ENCODE measurements at regions of chr5 and their contacts with region 1.

Region 1: GRCh38 chr5:81751009-81751835 is at the start of gene SSBP2:
- DNase-seq: peak; percentile 100
- ATAC-seq: peak; percentile 98
- total RNA-seq, gene SSBP2: 131 TPM

Region 2: GRCh38 chr5:81506900-81507588 is 244.2 kb before region 1 on chr5:
- intact Hi-C with region 1: loop called (anchors 10 kb)
- DNase-seq: no peak
- ATAC-seq: peak; percentile 98

Region 3: DNA sequence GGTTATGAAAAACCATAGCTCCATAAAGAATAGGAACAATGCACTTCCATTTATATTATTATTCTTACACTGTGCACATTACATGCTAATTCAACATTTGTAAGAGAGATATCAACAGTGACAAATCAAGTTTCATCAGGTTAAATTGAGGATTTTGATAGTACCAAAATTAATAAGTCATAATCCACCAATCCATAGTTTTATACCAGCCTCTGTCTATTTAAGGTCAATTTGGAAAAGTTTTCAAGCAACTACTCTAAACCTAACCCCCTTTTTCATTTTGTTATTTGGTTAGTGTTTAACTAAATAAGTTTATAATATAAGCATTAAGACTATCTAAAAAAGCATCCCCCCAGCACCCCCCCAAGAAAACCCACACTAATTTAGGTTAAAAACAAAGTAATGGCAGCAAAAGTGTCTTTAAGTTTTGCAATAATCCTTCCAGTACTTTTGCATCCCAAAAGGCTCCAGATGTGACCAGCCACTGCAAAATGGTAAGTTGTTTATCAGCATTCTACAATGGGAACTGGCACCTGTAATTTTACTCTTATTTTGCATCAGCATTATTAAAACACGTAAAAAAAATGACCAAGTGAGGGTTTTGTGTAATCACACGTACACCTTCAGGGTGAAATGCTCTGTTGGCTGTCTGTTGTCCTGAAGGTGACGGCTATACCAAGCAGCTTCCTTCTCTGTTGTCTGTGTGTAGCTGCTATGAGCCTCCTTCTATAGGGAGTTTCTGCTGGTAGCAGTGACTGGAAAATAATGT is 36.4 kb after region 1 on chr5:
- intact Hi-C with region 1: loop called (anchors 5 kb)
- DNase-seq: peak; percentile 82
- ATAC-seq: peak; percentile 82

Region 4: GRCh38 chr5:81851481-81852178 is 100.4 kb after region 1 on chr5:
- intact Hi-C with region 1: loop called (anchors 2 kb)
- DNase-seq: peak; percentile 97
- ATAC-seq: peak; percentile 97

Measured in sciatic nerve (tissue), 2 donors.